ENCODE measurements at regions of chr12 and their contacts with region 1.

Region 1: DNA sequence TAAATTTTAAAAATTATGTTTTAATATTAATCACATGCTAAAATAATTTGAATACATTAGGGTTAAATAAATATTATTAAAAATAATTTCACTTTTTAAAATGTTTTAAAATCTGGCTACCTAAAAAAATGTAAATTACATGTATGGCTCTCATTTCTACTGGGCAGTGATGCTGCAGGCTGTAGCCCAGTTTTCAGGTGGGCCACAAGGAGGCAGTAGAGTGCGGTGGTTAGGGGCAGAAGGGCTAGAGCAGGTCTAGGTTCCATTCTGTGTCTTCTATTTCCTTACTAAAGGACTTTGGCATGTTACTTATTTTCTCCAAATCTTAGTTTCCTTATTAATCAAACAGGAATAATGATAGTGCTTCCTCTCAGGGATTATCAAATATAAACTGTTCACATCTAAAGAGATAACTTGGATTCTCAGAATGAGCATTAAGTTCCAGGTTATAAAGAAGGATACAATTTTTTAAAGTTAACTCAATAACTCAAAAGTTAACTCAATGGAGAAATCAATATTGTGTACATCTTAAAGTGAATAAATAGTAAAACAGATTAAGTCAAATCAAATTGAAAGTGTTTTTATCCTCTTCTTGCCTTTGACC is 54.9 kb upstream of the OVCH1 start:
- DNase-seq: peak; percentile 83
- ATAC-seq: peak; percentile 81
- H3K4me3 Mint-ChIP-seq: no peak overlapping the region
- H3K27ac Mint-ChIP-seq: no peak overlapping the region
- H3K4me1 Mint-ChIP-seq: no peaks in the 10 kb centered on the region
- H3K27me3 Mint-ChIP-seq: peaks cover 10% of the 10 kb centered on the region

Region 2: GRCh38 chr12:29889737-29890136 is 337.3 kb after region 1 on chr12:
- CTCF ChIA-PET with region 1: no interaction called
- POLR2A ChIA-PET with region 1: no interaction called
- intact Hi-C with region 1: loop called in 1 of 2 experiments (anchors 10 kb)
- DNase-seq: peak; percentile 53
- ATAC-seq: no peak
- H3K4me3 Mint-ChIP-seq: no peak overlapping the region
- H3K27ac Mint-ChIP-seq: no peak overlapping the region
- H3K4me1 Mint-ChIP-seq: no peaks in the 10 kb centered on the region
- H3K27me3 Mint-ChIP-seq: no peaks in the 10 kb centered on the region